Activated naive CD4-positive, alpha-beta T cell treated with anti-CD3 and anti-CD28 coated beads for 36 hours (primary cell): ENCODE measurements at regions of chr16 and their contacts with region 1.

Region 1: DNA sequence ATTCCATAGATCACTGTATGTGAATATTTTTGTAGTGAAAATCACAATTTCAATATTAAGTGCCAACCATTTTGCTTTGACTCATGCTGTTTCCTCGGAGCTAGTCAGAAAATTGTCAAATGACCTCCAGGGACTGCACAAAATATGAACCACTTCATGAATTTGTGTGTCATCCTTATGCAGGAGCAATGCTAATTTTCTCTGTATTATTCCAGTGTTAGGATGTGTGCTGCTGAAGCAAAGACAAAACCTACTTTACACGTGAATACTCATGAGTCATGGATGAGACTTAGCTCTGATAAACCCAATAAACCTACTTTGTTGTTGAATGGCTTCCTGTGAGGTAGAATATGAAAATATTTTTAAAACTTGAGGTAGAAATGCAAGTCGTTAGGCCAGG is 65.2 kb downstream of the SHCBP1 start:
- DNase-seq: no peak
- H3K4me3 Mint-ChIP-seq: no peak overlapping the region
- H3K27ac Mint-ChIP-seq: no peak overlapping the region
- H3K4me1 Mint-ChIP-seq: no peaks in the 10 kb centered on the region
- H3K27me3 Mint-ChIP-seq: peaks cover 16% of the 10 kb centered on the region

Region 2: GRCh38 chr16:46512960-46513359 is 43.0 kb before region 1 on chr16:
- CTCF ChIA-PET with region 1: no interaction called
- intact Hi-C with region 1: no loop called
- DNase-seq: no peak
- H3K4me3 Mint-ChIP-seq: no peak overlapping the region
- H3K27ac Mint-ChIP-seq: no peak overlapping the region
- H3K4me1 Mint-ChIP-seq: no peaks in the 10 kb centered on the region
- H3K27me3 Mint-ChIP-seq: no peaks in the 10 kb centered on the region

Region 3: DNA sequence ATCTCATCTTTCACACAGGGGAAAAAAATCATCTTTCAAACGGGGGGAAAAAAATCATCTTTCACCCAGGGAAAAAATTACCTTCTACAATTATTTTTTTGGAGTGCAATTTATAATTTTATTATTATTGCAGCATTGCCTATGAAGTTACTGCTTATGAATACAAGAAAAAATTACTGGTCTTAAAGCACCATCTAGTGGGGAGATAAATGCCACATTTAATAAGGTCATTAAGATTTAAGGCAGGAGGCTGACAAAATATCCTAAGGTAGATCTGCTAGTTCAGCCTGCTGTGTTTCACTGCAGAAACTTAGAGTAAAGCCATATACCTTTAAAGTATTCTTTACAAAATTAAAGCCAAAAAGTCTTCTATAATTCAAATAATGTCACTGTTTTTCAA is 51.6 kb after region 1 on chr16:
- CTCF ChIA-PET with region 1: interaction called, 15 read pairs
- intact Hi-C with region 1: loop called (anchors 10 kb)
- DNase-seq: no peak
- H3K4me3 Mint-ChIP-seq: no peak overlapping the region
- H3K27ac Mint-ChIP-seq: no peak overlapping the region
- H3K4me1 Mint-ChIP-seq: no peaks in the 10 kb centered on the region
- H3K27me3 Mint-ChIP-seq: no peaks in the 10 kb centered on the region

Region 4: DNA sequence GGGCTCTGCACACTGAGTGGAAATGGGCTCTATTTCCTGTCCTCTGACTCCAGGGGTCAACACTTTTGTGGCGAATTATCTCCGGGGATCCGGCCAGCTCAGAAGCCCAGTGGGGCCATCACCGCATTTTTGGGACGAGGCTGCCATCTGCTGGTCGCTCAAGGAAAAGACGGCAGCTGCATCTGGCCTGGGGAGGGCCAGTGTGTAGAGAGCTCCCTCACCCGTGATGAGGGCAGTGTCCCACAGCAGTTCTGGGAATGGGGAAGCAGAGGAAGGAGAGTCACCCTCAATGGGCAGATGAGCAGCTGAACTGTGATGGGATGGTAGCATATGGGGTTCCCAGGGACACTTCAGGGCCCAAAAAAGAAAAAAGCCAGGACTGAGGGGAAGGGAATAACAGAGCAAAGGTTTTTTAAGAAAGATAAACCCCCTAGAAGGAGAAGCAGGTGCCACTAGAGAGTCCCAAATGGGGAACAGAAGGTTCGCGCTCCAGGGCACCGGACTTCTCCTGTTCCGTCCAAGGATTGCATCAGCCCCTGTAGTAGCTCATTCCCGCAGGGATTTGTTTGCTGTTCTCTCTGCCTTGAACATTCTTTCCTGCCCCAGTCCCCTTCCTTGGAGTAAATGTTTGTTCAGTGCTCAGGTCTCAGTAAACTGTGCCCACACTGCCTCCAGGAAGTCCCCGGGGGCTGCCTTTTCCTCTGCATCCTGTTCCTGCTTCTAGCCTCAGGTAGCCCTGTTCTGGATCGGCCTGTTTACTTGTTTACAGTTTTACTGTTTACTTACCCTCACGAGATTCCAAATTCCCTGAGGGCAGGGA is 1609.2 kb after region 1 on chr16:
- CTCF ChIA-PET with region 1: no interaction called
- intact Hi-C with region 1: loop called (anchors 10 kb)
- DNase-seq: peak; percentile 78
- H3K4me3 Mint-ChIP-seq: no peak overlapping the region
- H3K27ac Mint-ChIP-seq: peak overlapping the region; percentile 61
- H3K4me1 Mint-ChIP-seq: peaks cover 4% of the 10 kb centered on the region
- H3K27me3 Mint-ChIP-seq: peaks cover 13% of the 10 kb centered on the region